MCF 10A (cell line): ENCODE measurements at regions of chr15 and their contacts with region 1.

Region 1: GRCh38 chr15:83365370-83365938 is 81.0 kb upstream of the BNC1 start:
- DNase-seq: peak; percentile 72
- H3K4me3 Mint-ChIP-seq: peak overlapping the region; percentile 74
- H3K27ac Mint-ChIP-seq: peak overlapping the region; percentile 95
- H3K4me1 Mint-ChIP-seq: peaks cover 29% of the 10 kb centered on the region
- H3K27me3 Mint-ChIP-seq: no peaks in the 10 kb centered on the region
- CTCF ChIP-seq: no peak

Region 2: GRCh38 chr15:83278173-83278572 is 87.3 kb before region 1 on chr15:
- CTCF ChIA-PET with region 1: no interaction called
- POLR2A ChIA-PET with region 1: interaction called, 30 read pairs
- intact Hi-C with region 1: no loop called
- DNase-seq: peak; percentile 70
- H3K4me3 Mint-ChIP-seq: no peak overlapping the region
- H3K27ac Mint-ChIP-seq: peak overlapping the region; percentile 99
- H3K4me1 Mint-ChIP-seq: peaks cover 41% of the 10 kb centered on the region
- H3K27me3 Mint-ChIP-seq: no peaks in the 10 kb centered on the region
- CTCF ChIP-seq: no peak

Region 3: DNA sequence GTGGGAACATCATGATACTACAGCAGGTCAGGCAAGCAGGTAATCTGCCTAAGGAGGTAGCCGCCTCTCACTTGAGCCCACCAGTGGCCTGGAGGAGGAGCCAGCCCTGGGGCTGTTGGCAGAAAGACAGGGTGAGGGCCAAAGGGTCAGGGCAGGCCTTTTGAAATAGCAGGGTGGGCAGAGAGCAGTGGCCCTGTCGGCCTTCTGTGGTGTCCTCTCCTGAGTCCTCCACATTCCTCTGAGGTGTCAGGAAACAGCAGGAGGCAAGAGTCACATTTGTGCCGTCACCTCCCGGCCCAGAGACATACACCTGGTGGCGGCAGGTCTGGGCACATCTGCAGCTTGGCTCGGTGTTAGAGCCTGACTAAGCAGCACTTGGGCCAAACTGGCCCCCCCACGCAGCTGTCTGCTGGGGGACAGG is 77.1 kb before region 1 on chr15:
- CTCF ChIA-PET with region 1: interaction called, 11 read pairs
- POLR2A ChIA-PET with region 1: interaction called, 47 read pairs
- intact Hi-C with region 1: loop called (anchors 1 kb)
- DNase-seq: peak; percentile 85
- H3K4me3 Mint-ChIP-seq: peak overlapping the region; percentile 28
- H3K27ac Mint-ChIP-seq: peak overlapping the region; percentile 71
- H3K4me1 Mint-ChIP-seq: peaks cover 59% of the 10 kb centered on the region
- H3K27me3 Mint-ChIP-seq: no peaks in the 10 kb centered on the region
- CTCF ChIP-seq: no peak

Region 4: DNA sequence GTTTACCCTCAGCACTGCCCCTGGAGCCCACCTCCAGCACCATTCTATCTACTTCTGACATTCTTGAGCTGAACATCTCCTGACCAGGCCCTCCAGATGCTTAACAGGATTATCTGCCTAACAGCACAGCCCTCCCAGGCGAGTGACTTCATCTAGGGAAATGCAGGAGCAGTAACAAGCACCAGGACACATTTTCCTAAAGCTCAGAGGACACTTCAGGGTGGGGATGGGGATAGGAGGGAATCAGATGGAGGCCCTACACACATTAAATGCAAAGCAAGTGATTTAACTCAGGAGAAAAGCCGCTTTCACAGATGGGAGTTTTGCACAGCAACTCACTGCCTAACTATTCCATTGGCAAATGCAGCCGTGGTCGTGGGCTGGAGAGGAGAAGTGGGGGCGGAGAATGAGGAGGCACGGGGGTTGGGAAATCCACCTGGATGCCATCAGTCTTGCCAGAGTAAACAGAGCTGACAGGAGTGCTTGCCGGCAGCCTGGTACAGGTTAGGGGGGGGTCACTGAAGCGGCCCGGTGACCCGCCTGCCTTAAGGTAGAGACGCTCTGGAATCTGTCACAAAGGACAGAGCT is 59.7 kb before region 1 on chr15:
- CTCF ChIA-PET with region 1: interaction called, 3 read pairs
- POLR2A ChIA-PET with region 1: interaction called, 17 read pairs
- intact Hi-C with region 1: no loop called
- DNase-seq: peak; percentile 89
- H3K4me3 Mint-ChIP-seq: peak overlapping the region; percentile 24
- H3K27ac Mint-ChIP-seq: peak overlapping the region; percentile 46
- H3K4me1 Mint-ChIP-seq: peaks cover 36% of the 10 kb centered on the region
- H3K27me3 Mint-ChIP-seq: no peaks in the 10 kb centered on the region
- CTCF ChIP-seq: no peak

Region 5: GRCh38 chr15:83498801-83499200 is 133.3 kb after region 1 on chr15:
- CTCF ChIA-PET with region 1: no interaction called
- POLR2A ChIA-PET with region 1: no interaction called
- intact Hi-C with region 1: no loop called
- DNase-seq: no peak
- H3K4me3 Mint-ChIP-seq: no peak overlapping the region
- H3K27ac Mint-ChIP-seq: no peak overlapping the region
- H3K4me1 Mint-ChIP-seq: no peaks in the 10 kb centered on the region
- H3K27me3 Mint-ChIP-seq: no peaks in the 10 kb centered on the region
- CTCF ChIP-seq: no peak